Caco-2 (cell line): ENCODE measurements at regions of chr14 and their contacts with region 1.

Region 1: GRCh38 chr14:92960711-92961549 is 38.0 kb downstream of the CHGA start:
- DNase-seq: no peak
- H3K4me3 ChIP-seq: no peak overlapping the region
- H3K4me3 Mint-ChIP-seq: no peak overlapping the region
- H3K27ac Mint-ChIP-seq: no peak overlapping the region
- H3K4me1 ChIP-seq: no peaks in the 10 kb centered on the region
- H3K4me1 Mint-ChIP-seq: no peaks in the 10 kb centered on the region
- H3K27me3 ChIP-seq: no peaks in the 10 kb centered on the region
- H3K27me3 Mint-ChIP-seq: no peaks in the 10 kb centered on the region
- CTCF ChIP-seq: no peak

Region 2: DNA sequence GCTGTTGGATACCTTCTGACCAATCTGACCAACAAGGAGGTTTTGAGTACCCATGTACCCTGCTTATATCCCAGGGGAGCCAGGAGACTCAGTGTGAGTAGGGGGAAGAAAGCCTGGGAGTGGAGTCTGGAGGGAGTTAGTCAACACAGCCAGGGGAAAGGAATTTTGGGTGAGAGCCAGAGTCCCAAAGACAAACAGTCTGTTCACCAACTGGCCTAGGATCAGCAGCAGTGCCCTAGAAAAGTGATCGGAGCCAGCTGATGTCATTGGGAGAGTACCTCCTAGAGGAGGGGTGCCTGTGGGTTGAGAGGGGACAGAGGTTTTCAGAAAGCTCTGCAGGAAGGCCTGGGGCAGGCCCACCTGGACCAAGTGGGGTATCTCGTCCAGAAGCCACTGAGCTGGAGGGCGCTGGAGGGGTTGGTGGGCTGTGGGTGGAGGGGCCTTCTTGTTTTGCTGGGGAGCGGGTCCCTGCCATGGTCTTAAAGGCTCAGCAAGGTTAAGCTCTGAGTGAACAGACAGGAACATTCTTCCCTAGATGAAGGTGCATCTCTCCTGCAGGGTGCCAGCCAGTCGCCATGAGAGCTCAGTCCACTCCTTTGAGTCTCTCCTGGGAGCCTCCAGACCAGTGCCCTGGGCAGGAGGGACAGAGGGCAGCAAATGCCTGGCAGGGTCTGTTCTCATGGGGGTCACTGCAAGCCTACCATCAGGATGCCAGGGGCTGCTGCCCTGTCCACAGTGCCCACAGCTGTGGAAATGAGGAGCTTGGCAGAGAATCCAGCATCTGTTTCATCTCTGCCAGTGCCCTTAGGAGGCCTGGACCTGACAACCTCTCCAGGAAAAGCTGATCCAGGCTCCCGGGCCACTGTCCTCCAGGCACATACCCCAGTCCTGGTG is 25.6 kb after region 1 on chr14:
- CTCF ChIA-PET with region 1: no interaction called
- POLR2A ChIA-PET with region 1: no interaction called
- intact Hi-C with region 1: no loop called
- DNase-seq: no peak
- H3K4me3 ChIP-seq: no peak overlapping the region
- H3K4me3 Mint-ChIP-seq: no peak overlapping the region
- H3K27ac Mint-ChIP-seq: no peak overlapping the region
- H3K4me1 ChIP-seq: no peaks in the 10 kb centered on the region
- H3K4me1 Mint-ChIP-seq: no peaks in the 10 kb centered on the region
- H3K27me3 ChIP-seq: no peaks in the 10 kb centered on the region
- H3K27me3 Mint-ChIP-seq: no peaks in the 10 kb centered on the region
- CTCF ChIP-seq: no peak

Region 3: DNA sequence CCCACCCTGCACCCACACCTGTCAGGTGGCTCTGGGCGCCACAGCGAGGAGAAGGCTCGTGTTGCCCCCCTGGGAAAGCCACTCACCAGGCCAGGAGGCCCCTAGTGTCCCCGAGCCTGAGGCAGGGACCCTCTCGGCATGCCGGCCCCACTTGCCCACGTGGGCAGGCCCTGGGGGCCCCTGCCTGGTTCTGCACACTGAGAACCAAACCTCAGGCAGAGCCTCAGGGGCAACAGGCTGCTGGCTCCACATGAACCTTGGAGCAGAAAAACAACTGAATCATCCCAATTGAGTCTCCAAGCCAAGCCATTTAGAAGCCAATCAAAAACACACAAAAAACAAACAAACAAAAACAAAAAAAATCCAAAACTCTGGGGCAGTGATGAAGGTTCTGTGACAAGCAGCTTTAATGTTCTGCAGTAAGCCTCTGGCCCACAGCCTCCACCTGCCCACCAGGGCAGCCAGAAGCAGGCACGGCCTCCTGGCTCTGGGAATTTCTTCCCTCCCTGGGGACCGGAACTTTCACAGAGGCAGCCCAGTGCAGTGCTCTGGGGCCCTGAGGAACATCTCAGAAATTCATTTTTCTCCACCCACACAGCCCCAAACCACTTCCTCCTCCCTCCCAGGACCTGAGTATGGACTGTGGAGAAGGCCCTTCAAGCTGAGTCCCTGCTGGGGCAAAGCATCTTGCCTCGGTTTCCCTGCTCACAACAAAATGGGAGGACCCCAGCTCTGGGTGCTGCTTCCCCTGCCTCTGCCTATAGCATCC is 52.2 kb after region 1 on chr14:
- CTCF ChIA-PET with region 1: no interaction called
- POLR2A ChIA-PET with region 1: no interaction called
- intact Hi-C with region 1: no loop called
- DNase-seq: no peak
- H3K4me3 ChIP-seq: no peak overlapping the region
- H3K4me3 Mint-ChIP-seq: no peak overlapping the region
- H3K27ac Mint-ChIP-seq: no peak overlapping the region
- H3K4me1 ChIP-seq: no peaks in the 10 kb centered on the region
- H3K4me1 Mint-ChIP-seq: peaks cover 4% of the 10 kb centered on the region
- H3K27me3 ChIP-seq: no peaks in the 10 kb centered on the region
- H3K27me3 Mint-ChIP-seq: no peaks in the 10 kb centered on the region
- CTCF ChIP-seq: no peak

Region 4: GRCh38 chr14:93033983-93034670 is 73.2 kb after region 1 on chr14:
- CTCF ChIA-PET with region 1: no interaction called
- POLR2A ChIA-PET with region 1: no interaction called
- intact Hi-C with region 1: loop called (anchors 10 kb)
- DNase-seq: peak in 1 of 2 experiments; percentile 34
- H3K4me3 ChIP-seq: no peak overlapping the region
- H3K4me3 Mint-ChIP-seq: no peak overlapping the region
- H3K27ac Mint-ChIP-seq: peak overlapping the region; percentile 39
- H3K4me1 ChIP-seq: peaks cover 47% of the 10 kb centered on the region
- H3K4me1 Mint-ChIP-seq: peaks cover 39% of the 10 kb centered on the region
- H3K27me3 ChIP-seq: no peaks in the 10 kb centered on the region
- H3K27me3 Mint-ChIP-seq: no peaks in the 10 kb centered on the region
- CTCF ChIP-seq: peak in 1 of 2 experiments; percentile 51